ENCODE measurements at regions of chr12 and their contacts with region 1.

Region 1: DNA sequence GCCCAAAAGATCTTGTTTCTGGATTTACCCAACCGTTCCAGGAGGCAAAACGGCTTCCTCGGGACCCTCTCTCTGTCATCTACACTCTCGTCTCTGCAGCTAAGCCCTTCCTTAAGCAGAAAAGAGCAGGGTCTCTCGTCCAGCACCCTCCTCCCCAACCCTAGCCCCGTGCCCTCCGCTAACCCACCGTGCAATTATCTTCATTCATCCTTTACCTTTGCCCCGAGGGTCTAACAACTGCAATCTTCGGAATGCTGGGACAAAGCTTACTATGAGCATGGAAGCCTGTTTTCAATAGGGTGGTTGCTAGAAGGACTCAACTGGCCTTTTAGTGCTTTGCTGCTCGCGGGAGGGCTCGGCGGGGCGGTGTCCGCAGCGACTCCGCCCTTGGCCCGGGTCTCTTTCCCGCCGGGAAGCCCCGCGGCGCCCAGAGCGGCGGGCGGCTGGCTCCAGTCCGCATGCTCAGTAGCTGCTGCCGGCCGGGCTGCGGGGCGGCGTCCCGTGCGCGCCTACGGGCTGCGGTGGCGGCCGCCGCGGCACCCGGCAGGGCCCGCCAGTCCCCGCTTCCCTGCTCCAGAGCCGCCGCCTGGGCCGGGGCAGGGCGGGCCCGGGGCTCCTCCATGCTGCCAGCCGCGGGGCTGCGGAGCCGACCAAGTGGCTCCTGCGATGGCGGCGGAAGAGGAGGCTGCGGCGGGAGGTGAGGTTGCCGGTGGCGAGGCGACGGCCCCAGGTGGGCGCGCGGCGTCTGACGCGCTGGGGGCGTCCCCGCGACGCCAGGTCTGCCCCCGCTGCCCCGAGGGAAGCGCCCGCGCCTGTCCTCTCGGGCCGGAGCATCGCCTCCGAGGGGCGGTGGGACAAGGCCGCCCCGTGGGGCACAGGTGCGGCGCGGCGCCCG is at the start of gene BMAL2:
- DNase-seq: peak; percentile 66
- ATAC-seq: peak; percentile 28
- H3K4me3 Mint-ChIP-seq: peak within 1 kb of the TSS; percentile 82
- H3K27ac Mint-ChIP-seq: peak within 1 kb of the TSS; percentile 90
- H3K4me1 Mint-ChIP-seq: peaks cover 42% of the 10 kb centered on the region
- H3K27me3 Mint-ChIP-seq: peaks cover 30% of the 10 kb centered on the region
- total RNA-seq, gene BMAL2: 10.9 to 13.2 TPM

Region 2: DNA sequence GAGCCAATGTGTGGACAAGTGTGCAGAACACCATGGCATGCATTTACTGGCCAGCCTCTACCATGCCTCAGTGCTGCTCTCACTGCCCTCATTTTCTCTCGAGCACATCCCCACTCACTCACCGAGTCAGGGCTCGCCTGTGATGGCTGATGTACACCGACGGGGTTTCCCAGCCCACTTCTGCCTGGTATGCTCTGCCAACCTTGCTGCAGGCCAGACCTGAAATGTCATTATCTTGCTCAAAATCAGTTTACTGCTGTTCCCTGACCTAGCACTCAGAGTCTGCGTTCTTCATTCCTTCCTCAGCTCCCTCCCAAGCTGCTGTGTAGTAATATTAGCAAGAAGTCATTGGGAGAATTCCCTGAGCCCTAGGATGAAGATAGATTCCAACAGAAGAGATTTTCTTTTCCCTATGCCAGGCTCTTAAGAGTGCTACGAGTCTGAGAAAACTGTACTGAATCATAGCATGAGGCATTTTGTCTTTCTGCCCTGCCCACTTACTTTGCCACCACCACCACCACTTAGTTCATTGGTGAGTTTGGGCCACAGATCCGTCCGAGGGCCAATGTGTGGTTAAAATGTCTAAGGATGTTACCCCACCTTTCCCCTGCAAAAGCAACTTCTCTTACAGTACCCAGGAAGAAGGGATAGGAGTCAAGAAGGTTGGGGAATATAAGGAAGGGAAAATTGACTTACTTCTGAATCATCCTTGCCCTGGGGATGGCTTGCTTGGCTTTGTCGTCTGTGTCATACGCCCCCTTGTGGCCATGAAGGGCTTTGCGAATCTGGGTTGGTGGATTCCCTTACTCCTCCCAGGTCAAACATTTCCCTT is 51.0 kb after region 1 on chr12:
- CTCF ChIA-PET with region 1: interaction called, 4 read pairs
- POLR2A ChIA-PET with region 1: no interaction called
- intact Hi-C with region 1: loop called (anchors 5 kb)
- DNase-seq: peak; percentile 83
- ATAC-seq: peak; percentile 68
- H3K4me3 Mint-ChIP-seq: no peak overlapping the region
- H3K27ac Mint-ChIP-seq: no peak overlapping the region
- H3K4me1 Mint-ChIP-seq: no peaks in the 10 kb centered on the region
- H3K27me3 Mint-ChIP-seq: no peaks in the 10 kb centered on the region

Region 3: DNA sequence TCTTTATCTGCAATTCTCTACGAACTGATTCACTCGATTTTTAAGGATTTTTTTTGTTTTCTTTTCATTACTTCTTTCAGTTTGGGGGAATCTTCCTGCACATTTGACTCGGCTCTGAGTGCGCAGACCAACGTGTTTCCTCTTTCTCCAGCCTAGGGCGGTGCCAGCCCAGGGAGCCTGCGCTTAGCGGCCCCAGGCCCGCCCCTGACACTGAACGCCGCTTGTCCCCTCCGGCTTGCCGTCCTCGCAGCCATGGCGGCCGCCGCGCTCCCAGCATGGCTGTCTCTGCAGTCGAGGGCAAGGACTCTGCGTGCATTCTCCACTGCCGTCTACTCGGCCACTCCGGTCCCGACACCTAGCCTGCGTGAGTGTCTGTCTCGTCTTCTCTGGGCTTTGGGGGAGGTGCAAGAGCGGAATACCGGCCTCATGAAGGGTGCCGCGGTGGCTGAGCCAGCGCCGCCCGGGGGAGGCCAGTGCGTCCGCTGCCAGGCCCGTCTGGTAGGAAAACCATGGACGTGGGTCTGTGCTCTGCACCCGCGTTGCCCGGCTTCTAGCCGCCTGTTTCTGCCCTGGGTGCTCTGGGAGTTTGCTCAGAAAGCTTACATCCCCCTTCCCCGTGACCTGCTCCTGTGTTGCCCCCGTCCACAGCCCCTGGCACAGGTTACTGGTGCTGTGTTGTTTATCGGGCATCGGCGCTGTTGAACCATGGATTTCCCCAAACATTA is 378.1 kb after region 1 on chr12 and contains the start of gene MRPS35:
- CTCF ChIA-PET with region 1: no interaction called
- POLR2A ChIA-PET with region 1: no interaction called
- intact Hi-C with region 1: loop called in 1 of 2 experiments (anchors 5 kb)
- DNase-seq: peak; percentile 95
- ATAC-seq: peak; percentile 98
- H3K4me3 Mint-ChIP-seq: peak within 1 kb of the TSS; percentile 94
- H3K27ac Mint-ChIP-seq: peak within 1 kb of the TSS; percentile 94
- H3K4me1 Mint-ChIP-seq: peaks cover 28% of the 10 kb centered on the region
- H3K27me3 Mint-ChIP-seq: no peaks in the 10 kb centered on the region
- total RNA-seq, gene MRPS35: 58.5 to 62.1 TPM